ENCODE measurements at regions of chr1 and their contacts with region 1.

Region 1: GRCh38 chr1:167185974-167186657 is 34.6 kb upstream of the POU2F1 start:
- DNase-seq: no peak
- ATAC-seq: no peak
- H3K4me3 Mint-ChIP-seq: no peak overlapping the region
- H3K27ac Mint-ChIP-seq: no peak overlapping the region
- H3K4me1 Mint-ChIP-seq: no peaks in the 10 kb centered on the region
- H3K27me3 Mint-ChIP-seq: peaks cover 10% of the 10 kb centered on the region
- CTCF ChIP-seq: no peak

Region 2: GRCh38 chr1:167077128-167077867 is 108.8 kb before region 1 on chr1:
- CTCF ChIA-PET with region 1: no interaction called
- POLR2A ChIA-PET with region 1: interaction called, 14 read pairs
- intact Hi-C with region 1: no loop called
- DNase-seq: no peak
- ATAC-seq: no peak
- H3K4me3 Mint-ChIP-seq: no peak overlapping the region
- H3K27ac Mint-ChIP-seq: no peak overlapping the region
- H3K4me1 Mint-ChIP-seq: no peaks in the 10 kb centered on the region
- H3K27me3 Mint-ChIP-seq: peaks cover 27% of the 10 kb centered on the region
- CTCF ChIP-seq: no peak

Region 3: DNA sequence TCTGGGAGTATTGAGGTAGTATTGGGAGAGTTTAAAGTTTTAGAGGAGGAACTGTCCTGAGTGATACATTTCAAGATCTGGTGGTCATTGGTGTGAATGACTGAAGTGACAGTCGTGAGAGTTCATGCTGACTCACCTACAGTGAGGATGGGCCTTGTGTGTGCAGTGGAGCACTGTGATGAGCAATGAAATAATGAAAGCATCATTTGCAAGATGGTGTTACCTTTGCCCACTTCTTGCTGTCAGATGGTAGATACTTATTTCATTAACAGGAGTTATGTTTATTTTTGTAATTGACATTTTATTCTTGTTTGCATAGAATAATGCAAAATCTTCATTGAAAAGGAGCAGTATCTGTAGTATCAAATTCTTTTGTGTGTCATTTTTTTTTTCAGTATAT is 63.6 kb after region 1 on chr1:
- CTCF ChIA-PET with region 1: no interaction called
- POLR2A ChIA-PET with region 1: no interaction called
- intact Hi-C with region 1: no loop called
- DNase-seq: no peak
- ATAC-seq: peak; percentile 61
- H3K4me3 Mint-ChIP-seq: no peak overlapping the region
- H3K27ac Mint-ChIP-seq: no peak overlapping the region
- H3K4me1 Mint-ChIP-seq: peaks cover 46% of the 10 kb centered on the region
- H3K27me3 Mint-ChIP-seq: no peaks in the 10 kb centered on the region
- CTCF ChIP-seq: no peak

Measured in activated B cell treated with CpG ODN at 0.5 μM for 24 hours (primary cell).